ENCODE measurements at regions of chr5 and their contacts with region 1.

Region 1: GRCh38 chr5:157366741-157367674 is 93.0 kb upstream of the NIPAL4 start:
- DNase-seq: peak; percentile 86
- ATAC-seq: peak; percentile 72
- H3K4me3 ChIP-seq: no peak overlapping the region
- H3K27ac ChIP-seq: 0 out of 2 replicates have a peak overlapping the region, but pooled peaks have one; percentile 1
- H3K4me1 ChIP-seq: peaks cover 33% of the 10 kb centered on the region
- H3K27me3 ChIP-seq: no peaks in the 10 kb centered on the region
- CTCF ChIP-seq: peak; percentile 98

Region 2: GRCh38 chr5:156755421-156756087 is 611.5 kb before region 1 on chr5:
- CTCF ChIA-PET with region 1: no interaction called
- POLR2A ChIA-PET with region 1: no interaction called
- intact Hi-C with region 1: no loop called
- DNase-seq: peak; percentile 10
- ATAC-seq: no peak
- H3K4me3 ChIP-seq: no peak overlapping the region
- H3K27ac ChIP-seq: no peak overlapping the region
- H3K4me1 ChIP-seq: no peaks in the 10 kb centered on the region
- H3K27me3 ChIP-seq: no peaks in the 10 kb centered on the region
- CTCF ChIP-seq: no peak

Region 3: GRCh38 chr5:157290981-157291711 is 75.9 kb before region 1 on chr5:
- CTCF ChIA-PET with region 1: no interaction called
- POLR2A ChIA-PET with region 1: no interaction called
- intact Hi-C with region 1: no loop called
- DNase-seq: no peak
- ATAC-seq: no peak
- H3K4me3 ChIP-seq: no peak overlapping the region
- H3K27ac ChIP-seq: no peak overlapping the region
- H3K4me1 ChIP-seq: no peaks in the 10 kb centered on the region
- H3K27me3 ChIP-seq: no peaks in the 10 kb centered on the region
- CTCF ChIP-seq: no peak

Region 4: GRCh38 chr5:157322581-157322980 is 44.4 kb before region 1 on chr5:
- CTCF ChIA-PET with region 1: no interaction called
- POLR2A ChIA-PET with region 1: no interaction called
- intact Hi-C with region 1: no loop called
- DNase-seq: no peak
- ATAC-seq: no peak
- H3K4me3 ChIP-seq: no peak overlapping the region
- H3K27ac ChIP-seq: no peak overlapping the region
- H3K4me1 ChIP-seq: no peaks in the 10 kb centered on the region
- H3K27me3 ChIP-seq: no peaks in the 10 kb centered on the region
- CTCF ChIP-seq: no peak

Region 5: GRCh38 chr5:157384971-157385709 is 18.1 kb after region 1 on chr5:
- CTCF ChIA-PET with region 1: interaction called, 3 read pairs
- POLR2A ChIA-PET with region 1: interaction called, 3 read pairs
- intact Hi-C with region 1: loop called (anchors 1 kb)
- DNase-seq: peak; percentile 98
- ATAC-seq: peak; percentile 83
- H3K4me3 ChIP-seq: peak overlapping the region; percentile 9; the same call in 1 of the 2 replicates
- H3K27ac ChIP-seq: peak overlapping the region; percentile 71
- H3K4me1 ChIP-seq: peaks cover 75% of the 10 kb centered on the region
- H3K27me3 ChIP-seq: no peaks in the 10 kb centered on the region
- CTCF ChIP-seq: no peak

Region 6: GRCh38 chr5:157456301-157456700 is 89.3 kb after region 1 on chr5:
- CTCF ChIA-PET with region 1: no interaction called
- POLR2A ChIA-PET with region 1: interaction called, 13 read pairs
- intact Hi-C with region 1: no loop called
- DNase-seq: no peak
- ATAC-seq: no peak
- H3K4me3 ChIP-seq: no peak overlapping the region
- H3K27ac ChIP-seq: no peak overlapping the region
- H3K4me1 ChIP-seq: no peaks in the 10 kb centered on the region; the same call in 1 of the 2 replicates
- H3K27me3 ChIP-seq: no peaks in the 10 kb centered on the region
- CTCF ChIP-seq: no peak

Region 7: GRCh38 chr5:157648275-157648990 is 281.4 kb after region 1 on chr5:
- CTCF ChIA-PET with region 1: no interaction called
- POLR2A ChIA-PET with region 1: no interaction called
- intact Hi-C with region 1: no loop called
- DNase-seq: peak; percentile 32
- ATAC-seq: peak; percentile 58
- H3K4me3 ChIP-seq: no peak overlapping the region
- H3K27ac ChIP-seq: no peak overlapping the region
- H3K4me1 ChIP-seq: peaks cover 10% of the 10 kb centered on the region
- H3K27me3 ChIP-seq: no peaks in the 10 kb centered on the region
- CTCF ChIP-seq: no peak

Region 8: DNA sequence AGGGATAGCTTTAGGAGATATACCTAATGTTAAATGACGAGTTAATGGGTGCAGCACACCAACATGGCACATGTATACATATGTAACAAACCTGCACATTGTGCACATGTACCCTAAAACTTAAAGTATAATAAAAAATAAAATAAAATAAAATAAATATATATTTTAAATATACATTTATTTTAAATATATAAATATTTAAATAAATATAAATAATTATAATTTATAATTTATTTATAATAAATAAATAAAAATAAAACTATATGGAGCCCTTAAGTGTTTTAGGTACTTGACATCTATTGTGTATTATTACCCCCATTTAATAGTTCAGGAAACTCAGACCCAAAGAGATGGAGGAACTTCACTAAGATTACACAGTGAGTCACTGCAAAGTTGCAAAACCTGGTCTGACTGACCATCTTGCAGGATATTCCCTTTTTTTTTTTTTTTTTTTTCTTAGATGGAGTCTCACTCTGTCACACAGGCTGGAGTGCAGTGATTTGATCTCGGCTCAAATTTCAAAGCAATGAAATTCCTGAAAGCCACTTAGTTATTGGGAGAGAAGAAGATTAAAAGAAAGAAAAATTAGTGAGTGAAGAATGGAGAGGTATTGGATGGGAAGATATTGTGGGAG is 298.6 kb after region 1 on chr5:
- CTCF ChIA-PET with region 1: no interaction called
- POLR2A ChIA-PET with region 1: no interaction called
- intact Hi-C with region 1: loop called (anchors 5 kb)
- DNase-seq: peak; percentile 98
- ATAC-seq: peak; percentile 64
- H3K4me3 ChIP-seq: no peak overlapping the region
- H3K27ac ChIP-seq: peak overlapping the region; percentile 70
- H3K4me1 ChIP-seq: peaks cover 20% of the 10 kb centered on the region
- H3K27me3 ChIP-seq: no peaks in the 10 kb centered on the region
- CTCF ChIP-seq: no peak

Measured in PC-3 (cell line).